Activated T-helper 2 cell treated with anti-CD3 and anti-CD28 coated beads, Interferon-gamma antibody, Interleukin-2, Interleukin-4, amounts not matched to agents 10 μg/mL and 5 μg/mL and 100 μg/mL, durations not matched to agents 14 hours and 24 hours and 36 hours (primary cell): ENCODE measurements at regions of chr6 and their contacts with region 1.

Region 1: GRCh38 chr6:498795-499231 is 107.3 kb downstream of the IRF4 start:
- DNase-seq: peak; percentile 57
- H3K4me3 Mint-ChIP-seq: peak overlapping the region; percentile 72
- H3K27ac Mint-ChIP-seq: peak overlapping the region; percentile 86
- H3K4me1 Mint-ChIP-seq: peaks cover 81% of the 10 kb centered on the region
- H3K27me3 Mint-ChIP-seq: no peaks in the 10 kb centered on the region

Region 2: GRCh38 chr6:399785-400534 is 98.9 kb before region 1 on chr6:
- intact Hi-C with region 1: loop called (anchors 1 kb)
- DNase-seq: peak; percentile 57
- H3K4me3 Mint-ChIP-seq: peak overlapping the region; percentile 72
- H3K27ac Mint-ChIP-seq: peak overlapping the region; percentile 78
- H3K4me1 Mint-ChIP-seq: peaks cover 86% of the 10 kb centered on the region
- H3K27me3 Mint-ChIP-seq: no peaks in the 10 kb centered on the region

Region 3: GRCh38 chr6:484086-484745 is 14.6 kb before region 1 on chr6:
- intact Hi-C with region 1: loop called (anchors 2 kb)
- DNase-seq: no peak
- H3K4me3 Mint-ChIP-seq: no peak overlapping the region
- H3K27ac Mint-ChIP-seq: peak overlapping the region; percentile 96
- H3K4me1 Mint-ChIP-seq: peaks cover 80% of the 10 kb centered on the region
- H3K27me3 Mint-ChIP-seq: no peaks in the 10 kb centered on the region